Breast epithelium (tissue), 4 donors: ENCODE measurements at regions of chr18 and their contacts with region 1.

Region 1: DNA sequence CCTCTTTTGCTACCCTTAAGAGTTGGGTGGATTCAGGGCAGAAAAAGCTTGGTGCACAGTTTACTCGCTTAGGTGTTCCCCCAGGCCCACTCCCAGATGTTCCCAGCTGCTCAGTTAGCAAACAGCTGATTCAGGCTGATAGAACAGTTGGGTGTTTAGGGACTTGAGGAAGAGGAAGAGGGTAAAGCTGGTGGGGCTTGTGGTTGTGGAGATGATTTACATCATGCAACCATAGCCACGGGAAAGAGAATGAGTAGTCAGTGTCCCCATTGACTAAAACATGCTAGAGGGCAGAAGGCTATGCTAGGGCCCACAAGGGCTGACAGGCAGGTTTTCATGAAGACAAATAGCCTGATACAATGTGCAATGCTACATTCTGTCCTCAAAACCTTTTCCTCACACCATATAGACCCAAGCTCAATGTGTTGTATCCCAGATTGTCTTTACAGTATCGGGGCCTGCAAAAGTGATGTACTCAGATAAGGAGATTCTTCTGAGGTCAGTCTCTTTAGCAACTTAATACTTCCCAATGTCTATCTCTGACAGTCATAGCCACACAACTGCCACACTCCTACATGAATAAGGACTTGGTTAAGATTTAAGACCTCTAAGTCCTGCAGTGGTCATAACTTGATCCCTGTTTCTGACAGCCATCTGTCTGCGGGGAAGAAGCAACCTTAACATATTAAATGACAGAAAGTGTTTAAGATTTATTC is 15.6 kb downstream of the COLEC12 start:
- DNase-seq: no peak
- H3K4me3 ChIP-seq: no peak overlapping the region
- H3K27ac ChIP-seq: no peak overlapping the region
- H3K4me1 ChIP-seq: no peaks in the 10 kb centered on the region
- H3K27me3 ChIP-seq: no peaks in the 10 kb centered on the region
- CTCF ChIP-seq: no peak
- POLR2A ChIP-seq: no peak

Region 2: DNA sequence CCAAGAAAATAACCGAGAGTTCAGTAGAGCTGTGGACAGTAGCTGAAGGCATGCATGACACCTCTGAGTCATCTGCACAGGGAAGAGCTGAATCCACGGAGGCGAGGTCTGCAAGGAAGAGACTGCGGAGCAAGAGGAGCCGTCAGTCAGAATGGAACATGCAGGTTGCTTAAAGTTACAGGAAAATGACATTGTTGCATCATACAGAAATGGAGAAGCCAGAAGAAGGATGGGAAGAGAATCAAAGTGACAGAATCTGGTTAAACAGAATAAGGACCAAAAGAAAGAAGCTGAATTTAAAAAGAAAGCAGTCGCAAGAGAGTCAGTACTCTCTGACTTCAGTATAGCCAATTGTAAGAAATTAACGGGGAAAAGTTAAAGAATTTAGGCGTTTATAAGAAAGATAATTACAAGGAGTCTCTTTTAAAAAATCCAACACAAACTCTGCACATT is 953.6 kb after region 1 on chr18:
- intact Hi-C with region 1: loop called (anchors 5 kb)
- DNase-seq: no peak
- H3K4me3 ChIP-seq: no peak overlapping the region
- H3K27ac ChIP-seq: no peak overlapping the region
- H3K4me1 ChIP-seq: no peaks in the 10 kb centered on the region
- H3K27me3 ChIP-seq: no peaks in the 10 kb centered on the region
- CTCF ChIP-seq: no peak
- POLR2A ChIP-seq: no peak